ENCODE measurements at regions of chr16 and their contacts with region 1.

Region 1: DNA sequence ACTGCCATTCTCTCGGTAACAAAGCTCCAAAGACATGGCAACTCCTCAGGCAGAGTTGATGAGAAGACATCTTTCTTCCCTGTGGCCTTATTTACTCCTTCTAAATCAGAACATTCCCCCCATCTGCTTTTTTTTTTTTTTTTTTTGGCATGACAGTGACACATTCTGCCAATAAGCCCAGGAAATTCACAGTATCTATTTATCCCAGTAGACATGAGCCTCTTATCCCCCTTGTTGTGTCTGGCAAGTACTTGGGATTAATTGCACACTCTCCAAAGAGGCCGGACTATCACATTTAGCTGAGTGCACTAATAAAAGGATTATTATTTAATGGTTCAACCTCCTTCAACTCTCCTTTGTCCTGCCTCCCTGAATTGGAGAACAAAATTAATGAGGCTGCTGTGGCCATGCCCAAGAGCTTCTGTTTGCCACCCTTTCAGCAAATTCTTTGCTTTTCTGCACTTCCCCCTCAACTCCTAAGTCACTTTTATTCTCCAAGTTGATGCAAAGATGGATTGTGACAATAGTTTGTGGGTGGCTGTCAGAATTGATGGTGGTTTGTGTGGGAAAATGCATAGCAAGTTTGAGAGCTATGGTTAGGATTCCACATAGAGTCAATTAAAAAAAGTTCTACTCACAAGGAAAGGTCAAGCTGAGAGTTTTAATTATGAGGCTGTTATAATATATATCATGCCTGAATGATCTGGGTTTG is 47.2 kb downstream of the GPR139 start:
- DNase-seq: no peak
- H3K4me3 Mint-ChIP-seq: no peak overlapping the region
- H3K27ac Mint-ChIP-seq: no peak overlapping the region
- H3K4me1 Mint-ChIP-seq: no peaks in the 10 kb centered on the region
- H3K27me3 Mint-ChIP-seq: peaks cover 68% of the 10 kb centered on the region
- CTCF ChIP-seq: no peak

Region 2: GRCh38 chr16:19974607-19975006 is 51.9 kb before region 1 on chr16:
- CTCF ChIA-PET with region 1: no interaction called
- intact Hi-C with region 1: loop called (anchors 5 kb)
- DNase-seq: no peak
- H3K4me3 Mint-ChIP-seq: no peak overlapping the region
- H3K27ac Mint-ChIP-seq: no peak overlapping the region
- H3K4me1 Mint-ChIP-seq: no peaks in the 10 kb centered on the region
- H3K27me3 Mint-ChIP-seq: peaks cover 88% of the 10 kb centered on the region
- CTCF ChIP-seq: no peak

Measured in Calu3 (cell line).